ENCODE measurements at regions of chr20 and their contacts with region 1.

Region 1: GRCh38 chr20:50929299-50930138 is 1.7 kb downstream of the ADNP start:
- DNase-seq: peak; percentile 98
- ATAC-seq: peak; percentile 70
- H3K4me3 Mint-ChIP-seq: peak overlapping the region; percentile 90
- H3K27ac Mint-ChIP-seq: peak overlapping the region; percentile 95
- H3K4me1 Mint-ChIP-seq: peaks cover 53% of the 10 kb centered on the region
- H3K27me3 Mint-ChIP-seq: no peaks in the 10 kb centered on the region

Region 2: GRCh38 chr20:50815162-50815989 is 114.1 kb before region 1 on chr20:
- CTCF ChIA-PET with region 1: interaction called, 90 read pairs
- POLR2A ChIA-PET with region 1: interaction called, 6 read pairs
- DNase-seq: no peak
- ATAC-seq: peak; percentile 29
- H3K4me3 Mint-ChIP-seq: peak overlapping the region; percentile 58
- H3K27ac Mint-ChIP-seq: peak overlapping the region; percentile 91
- H3K4me1 Mint-ChIP-seq: peaks cover 69% of the 10 kb centered on the region
- H3K27me3 Mint-ChIP-seq: no peaks in the 10 kb centered on the region

Region 3: DNA sequence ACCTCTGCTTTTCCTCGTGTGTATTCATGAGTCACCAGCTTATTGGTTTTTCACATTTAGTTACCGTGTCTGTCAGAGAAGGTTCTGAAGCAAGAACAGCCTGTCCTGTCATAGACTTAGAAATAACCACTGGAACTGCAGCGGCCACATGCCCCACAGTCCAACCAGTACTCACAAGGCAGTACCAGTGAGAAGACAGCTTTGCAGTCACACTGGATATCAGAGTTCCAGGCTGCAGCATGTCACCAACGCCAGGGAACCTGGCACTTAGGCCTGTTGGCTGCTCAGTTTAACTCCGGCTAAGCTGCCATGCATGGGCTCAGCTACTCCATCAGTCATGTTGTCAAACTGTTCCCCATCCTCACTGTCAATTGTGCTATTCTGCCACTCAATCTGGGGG is 38.4 kb before region 1 on chr20:
- CTCF ChIA-PET with region 1: interaction called, 11 read pairs
- POLR2A ChIA-PET with region 1: interaction called, 3 read pairs
- DNase-seq: no peak
- ATAC-seq: no peak
- H3K4me3 Mint-ChIP-seq: no peak overlapping the region
- H3K27ac Mint-ChIP-seq: peak overlapping the region; percentile 18
- H3K4me1 Mint-ChIP-seq: peaks cover 3% of the 10 kb centered on the region
- H3K27me3 Mint-ChIP-seq: no peaks in the 10 kb centered on the region

Region 4: DNA sequence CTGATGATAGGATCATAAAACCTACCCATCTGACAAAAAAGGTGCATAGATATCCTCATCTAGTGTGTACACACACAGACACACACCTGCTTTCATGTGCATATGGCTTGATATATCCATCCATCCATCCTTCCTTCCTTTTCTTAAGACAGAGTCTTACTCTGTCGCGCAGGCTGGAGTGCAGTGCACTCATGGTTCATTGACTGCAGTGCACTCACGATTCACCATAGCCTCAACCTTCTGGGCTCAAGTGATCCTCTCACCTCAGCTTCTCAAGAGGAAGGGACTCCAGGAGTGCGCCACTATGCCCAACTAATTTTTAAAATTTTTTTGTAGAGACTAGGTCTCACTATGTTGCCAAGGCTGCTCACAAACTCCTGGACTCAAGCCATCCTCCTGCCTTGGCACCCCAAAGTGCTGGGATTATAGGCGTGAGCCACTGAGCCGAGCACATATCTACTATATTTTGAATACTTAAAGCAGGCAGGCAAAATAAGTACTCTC is 25.4 kb before region 1 on chr20:
- CTCF ChIA-PET with region 1: interaction called, 98 read pairs
- POLR2A ChIA-PET with region 1: no interaction called
- DNase-seq: no peak
- ATAC-seq: no peak
- H3K4me3 Mint-ChIP-seq: no peak overlapping the region
- H3K27ac Mint-ChIP-seq: no peak overlapping the region
- H3K4me1 Mint-ChIP-seq: peaks cover 5% of the 10 kb centered on the region
- H3K27me3 Mint-ChIP-seq: no peaks in the 10 kb centered on the region

Region 5: DNA sequence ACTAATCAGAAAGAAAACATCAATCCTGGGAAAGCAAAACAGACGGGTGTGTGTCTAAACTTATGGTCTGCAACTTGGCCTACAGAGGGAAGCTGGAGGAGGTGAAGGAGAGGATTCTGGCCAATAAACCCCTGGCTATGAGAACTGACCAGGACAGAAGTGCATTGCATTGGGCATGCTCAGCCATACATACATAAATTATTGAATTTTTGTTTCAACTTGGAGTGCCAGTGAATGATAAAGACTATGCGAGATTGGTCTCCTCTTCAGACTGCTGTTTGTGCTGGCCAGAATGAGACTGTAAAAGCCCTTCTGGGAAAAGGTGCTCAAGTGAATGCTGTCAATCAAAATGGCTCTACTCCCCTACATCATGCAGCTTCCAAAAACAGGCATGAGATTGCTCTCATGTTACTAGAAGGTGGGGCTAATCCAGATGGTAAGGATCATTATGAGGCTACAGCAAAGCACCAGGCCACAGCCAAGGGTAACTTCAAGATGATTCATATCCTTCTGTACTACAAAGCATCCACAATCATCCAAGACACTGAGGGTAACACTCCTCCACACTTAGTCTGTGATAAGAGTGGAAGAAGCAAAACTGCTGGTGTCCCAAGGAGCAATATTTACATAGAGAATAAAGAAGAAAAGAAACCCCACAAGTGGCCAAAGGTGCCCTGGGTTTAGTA is 15.7 kb before region 1 on chr20:
- CTCF ChIA-PET with region 1: interaction called, 98 read pairs
- POLR2A ChIA-PET with region 1: interaction called, 10 read pairs
- DNase-seq: no peak
- ATAC-seq: peak; percentile 67
- H3K4me3 Mint-ChIP-seq: no peak overlapping the region
- H3K27ac Mint-ChIP-seq: peak overlapping the region; percentile 70
- H3K4me1 Mint-ChIP-seq: peaks cover 62% of the 10 kb centered on the region
- H3K27me3 Mint-ChIP-seq: no peaks in the 10 kb centered on the region

Region 6: GRCh38 chr20:50958615-50959542 is 29.4 kb after region 1 on chr20 and contains the start of gene MOCS3:
- CTCF ChIA-PET with region 1: interaction called, 31 read pairs
- POLR2A ChIA-PET with region 1: interaction called, 101 read pairs
- DNase-seq: peak; percentile 91
- ATAC-seq: peak; percentile 75
- H3K4me3 Mint-ChIP-seq: peak within 1 kb of the TSS; percentile 93
- H3K27ac Mint-ChIP-seq: peak within 1 kb of the TSS; percentile 99
- H3K4me1 Mint-ChIP-seq: peaks cover 44% of the 10 kb centered on the region
- H3K27me3 Mint-ChIP-seq: no peaks in the 10 kb centered on the region
- total RNA-seq, gene MOCS3: 4.8 to 5.7 TPM

Region 7: DNA sequence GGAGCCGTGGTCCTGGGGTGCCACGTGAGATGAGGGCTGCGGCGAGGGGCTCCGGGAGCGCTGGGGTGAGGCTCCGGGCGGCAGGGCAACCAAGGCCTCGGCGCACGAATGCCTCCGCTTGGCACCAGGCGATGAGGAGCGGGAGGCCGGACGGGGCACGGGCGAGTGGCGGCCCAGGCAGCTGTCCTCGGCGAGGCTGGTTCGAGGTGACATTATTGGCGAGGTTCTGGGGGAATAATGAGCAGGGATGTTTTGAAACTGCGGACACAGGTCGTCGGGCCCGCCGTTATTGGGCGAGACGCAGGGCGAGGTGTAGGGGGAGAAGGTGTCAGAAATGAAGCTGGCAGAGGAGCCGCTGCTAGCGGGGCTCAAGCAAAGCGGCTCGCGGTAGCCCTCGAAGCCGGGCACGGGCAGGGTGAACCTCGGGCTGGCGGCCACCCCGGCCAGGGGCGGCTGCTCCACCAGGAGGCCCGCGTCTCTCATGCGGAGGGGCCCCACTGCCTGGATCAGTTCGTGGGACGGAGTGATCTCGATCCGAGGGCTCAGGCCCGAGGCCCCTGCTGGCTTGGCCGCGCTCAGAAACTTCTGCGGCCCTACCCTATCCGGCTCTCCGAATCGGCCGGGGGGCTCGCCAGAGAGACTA is 594.0 kb after region 1 on chr20:
- CTCF ChIA-PET with region 1: no interaction called
- POLR2A ChIA-PET with region 1: no interaction called
- DNase-seq: no peak
- ATAC-seq: no peak
- H3K4me3 Mint-ChIP-seq: no peak overlapping the region
- H3K27ac Mint-ChIP-seq: no peak overlapping the region
- H3K4me1 Mint-ChIP-seq: peaks cover 62% of the 10 kb centered on the region
- H3K27me3 Mint-ChIP-seq: no peaks in the 10 kb centered on the region

Measured in activated CD8-positive, alpha-beta T cell treated with anti-CD3 and anti-CD28 coated beads, Interleukin-2, amount 10 ng/mL, durations not matched to agents 7 days and 5 days (primary cell).